ENCODE measurements at regions of chr20 and their contacts with region 1.

Region 1: DNA sequence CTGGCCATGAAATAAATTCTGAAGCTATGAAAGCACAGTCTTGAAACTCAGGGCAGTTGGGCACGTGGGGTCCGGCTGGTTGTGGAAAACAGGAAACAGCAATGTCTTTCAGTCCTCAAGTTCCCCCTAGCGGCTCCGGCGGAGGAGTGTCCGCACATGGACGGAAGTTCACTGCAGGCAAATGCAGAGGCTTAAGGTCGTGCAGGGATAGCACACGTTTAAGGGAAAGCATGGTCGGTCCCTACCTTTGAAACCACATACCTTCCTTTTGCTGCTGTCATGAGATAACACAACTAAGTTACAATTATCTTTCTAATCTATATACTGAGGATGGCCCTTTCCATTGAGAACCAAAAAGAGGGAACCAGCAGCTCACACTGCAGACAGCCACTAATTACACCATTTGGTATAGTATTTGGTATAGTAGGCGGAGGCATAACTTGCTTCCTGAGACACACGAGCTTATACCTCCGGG is 52.6 kb upstream of the NFATC2 start:
- DNase-seq: peak; percentile 50 to 89 (median 75)
- ATAC-seq: peak; percentile 90
- H3K4me3 ChIP-seq: no peak overlapping the region
- H3K4me3 Mint-ChIP-seq: peak overlapping the region; percentile 38
- H3K27ac ChIP-seq: no peak overlapping the region
- H3K27ac Mint-ChIP-seq: peak overlapping the region; percentile 11
- H3K4me1 ChIP-seq: peaks cover 5% of the 10 kb centered on the region
- H3K4me1 Mint-ChIP-seq: peaks cover 12% of the 10 kb centered on the region
- H3K27me3 ChIP-seq: no peaks in the 10 kb centered on the region
- H3K27me3 Mint-ChIP-seq: no peaks in the 10 kb centered on the region
- CTCF ChIP-seq: peak; percentile 84

Region 2: DNA sequence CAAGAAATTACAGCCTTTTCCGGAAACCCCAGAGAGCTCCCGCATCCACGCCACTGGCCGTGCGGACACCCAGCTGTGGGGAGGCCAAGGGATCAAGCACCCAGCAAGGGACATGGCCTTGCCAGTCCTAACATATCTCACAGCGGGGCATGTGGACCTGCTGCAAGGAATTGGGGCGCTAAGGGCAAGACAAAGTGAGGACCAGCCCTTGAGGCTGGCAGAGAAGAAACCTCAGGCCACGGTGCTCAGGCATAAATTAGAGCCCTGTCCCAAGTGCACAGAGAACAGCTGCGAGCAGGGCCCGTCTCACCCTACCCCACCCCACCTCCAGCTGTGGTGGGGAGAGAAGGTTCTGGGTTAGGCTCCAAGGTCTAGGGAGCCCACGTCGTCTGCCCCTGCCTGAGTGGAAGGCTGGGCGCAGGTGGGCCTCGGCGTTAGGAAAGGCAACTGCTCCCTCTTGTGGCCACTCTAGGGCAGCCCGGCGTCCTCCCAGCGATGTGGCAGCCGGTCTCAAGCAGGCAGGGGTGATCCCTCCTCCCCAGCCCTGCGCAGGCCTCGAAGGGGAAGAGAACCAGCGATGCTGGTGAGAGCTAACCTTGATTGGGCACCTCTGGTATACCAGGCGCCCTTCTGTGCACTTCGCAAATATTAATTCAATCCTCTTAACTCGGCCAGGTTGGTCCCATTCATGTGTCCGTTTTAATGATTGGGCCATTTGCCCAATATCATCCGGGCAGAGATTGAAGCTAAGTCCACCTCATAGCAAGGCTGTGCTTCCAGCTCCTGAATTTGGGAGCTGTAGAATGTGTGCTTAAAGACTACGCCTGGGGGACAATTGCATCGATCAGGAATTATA is 288.4 kb before region 1 on chr20:
- CTCF ChIA-PET with region 1: interaction called, 18 read pairs
- POLR2A ChIA-PET with region 1: no interaction called
- intact Hi-C with region 1: loop called (anchors 1 to 5 kb)
- DNase-seq: peak; percentile 47 to 82 (median 74)
- ATAC-seq: peak; percentile 90
- H3K4me3 ChIP-seq: no peak overlapping the region
- H3K4me3 Mint-ChIP-seq: no peak overlapping the region
- H3K27ac ChIP-seq: no peak overlapping the region
- H3K27ac Mint-ChIP-seq: no peak overlapping the region
- H3K4me1 ChIP-seq: no peaks in the 10 kb centered on the region
- H3K4me1 Mint-ChIP-seq: peaks cover 5% of the 10 kb centered on the region
- H3K27me3 ChIP-seq: peaks cover 0 to 2% of the 10 kb centered on the region in 2 experiments
- H3K27me3 Mint-ChIP-seq: peaks cover 12% of the 10 kb centered on the region
- CTCF ChIP-seq: peak; percentile 77

Region 3: DNA sequence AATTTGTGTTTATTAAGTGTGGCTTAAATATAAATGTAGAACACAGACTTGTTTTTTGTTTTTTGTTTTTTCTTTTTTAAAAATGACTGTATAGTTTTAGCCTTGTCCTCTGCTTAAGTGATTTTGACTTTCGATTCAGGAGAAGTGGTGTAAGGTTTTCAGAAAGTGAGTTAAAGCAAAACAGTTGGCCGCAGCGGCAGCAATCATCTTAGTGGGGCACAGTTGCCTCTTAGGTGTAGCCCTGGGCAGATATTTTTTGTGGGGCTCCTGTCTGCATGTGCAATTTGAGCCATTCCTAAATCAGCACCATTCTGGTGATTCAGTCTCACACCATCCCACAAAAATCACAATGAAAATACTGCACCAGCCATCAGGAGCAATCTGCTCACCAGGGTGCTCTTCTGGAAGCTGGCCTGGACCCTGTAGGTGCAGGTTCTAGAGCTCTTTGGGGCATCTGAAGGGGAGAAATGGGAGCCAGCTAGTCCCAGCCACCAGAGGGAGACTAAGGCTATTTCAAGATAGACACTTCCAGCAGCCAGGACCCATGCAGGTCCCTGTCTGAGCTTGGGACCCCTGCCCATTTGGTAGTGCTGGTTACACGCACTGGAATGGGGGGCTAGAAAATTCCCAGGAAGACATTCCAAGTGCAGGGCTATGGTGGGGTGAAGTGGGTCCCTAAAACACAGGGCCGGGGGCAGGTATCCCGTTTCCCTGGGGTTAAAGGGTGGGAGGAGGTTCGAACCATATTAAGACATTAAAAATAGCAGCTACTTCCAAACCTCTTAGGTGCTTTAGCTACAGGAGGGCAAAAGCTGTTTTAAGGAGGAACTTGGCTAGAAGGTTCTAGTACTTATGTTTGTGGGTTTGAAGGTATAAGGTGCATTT is 209.2 kb before region 1 on chr20:
- CTCF ChIA-PET with region 1: interaction called, 29 read pairs
- POLR2A ChIA-PET with region 1: interaction called, 3 read pairs
- intact Hi-C with region 1: loop called (anchors 1 kb)
- DNase-seq: peak in 6 of 9 experiments; percentile 7 to 71 (median 31)
- ATAC-seq: peak; percentile 56
- H3K4me3 ChIP-seq: no peak overlapping the region
- H3K4me3 Mint-ChIP-seq: no peak overlapping the region
- H3K27ac ChIP-seq: peak overlapping the region in 1 of 2 experiments; percentile 23
- H3K27ac Mint-ChIP-seq: peak overlapping the region; percentile 75
- H3K4me1 ChIP-seq: peaks cover 9% of the 10 kb centered on the region
- H3K4me1 Mint-ChIP-seq: peaks cover 38% of the 10 kb centered on the region
- H3K27me3 ChIP-seq: no peaks in the 10 kb centered on the region
- H3K27me3 Mint-ChIP-seq: no peaks in the 10 kb centered on the region
- CTCF ChIP-seq: peak; percentile 48

Region 4: GRCh38 chr20:51512645-51513044 is 82.5 kb before region 1 on chr20:
- CTCF ChIA-PET with region 1: interaction called, 11 read pairs
- POLR2A ChIA-PET with region 1: no interaction called
- intact Hi-C with region 1: no loop called
- DNase-seq: peak in 2 of 9 experiments; percentile 39 to 56
- ATAC-seq: peak; percentile 75
- H3K4me3 ChIP-seq: no peak overlapping the region
- H3K4me3 Mint-ChIP-seq: peak overlapping the region; percentile 13
- H3K27ac ChIP-seq: peak overlapping the region in 1 of 2 experiments; percentile 63
- H3K27ac Mint-ChIP-seq: peak overlapping the region; percentile 89
- H3K4me1 ChIP-seq: peaks cover 55% of the 10 kb centered on the region
- H3K4me1 Mint-ChIP-seq: peaks cover 70% of the 10 kb centered on the region
- H3K27me3 ChIP-seq: no peaks in the 10 kb centered on the region
- H3K27me3 Mint-ChIP-seq: no peaks in the 10 kb centered on the region
- CTCF ChIP-seq: no peak

Region 5: GRCh38 chr20:51579137-51579536 is 16.0 kb before region 1 on chr20:
- CTCF ChIA-PET with region 1: interaction called, 15 read pairs
- POLR2A ChIA-PET with region 1: no interaction called
- intact Hi-C with region 1: no loop called
- DNase-seq: no peak
- ATAC-seq: no peak
- H3K4me3 ChIP-seq: no peak overlapping the region
- H3K4me3 Mint-ChIP-seq: no peak overlapping the region
- H3K27ac ChIP-seq: no peak overlapping the region
- H3K27ac Mint-ChIP-seq: no peak overlapping the region
- H3K4me1 ChIP-seq: no peaks in the 10 kb centered on the region
- H3K4me1 Mint-ChIP-seq: no peaks in the 10 kb centered on the region
- H3K27me3 ChIP-seq: no peaks in the 10 kb centered on the region
- H3K27me3 Mint-ChIP-seq: no peaks in the 10 kb centered on the region
- CTCF ChIP-seq: no peak